Activated CD8-positive, alpha-beta T cell treated with anti-CD3 and anti-CD28 coated beads, Interleukin-2, amount 10 ng/mL, durations not matched to agents 7 days and 5 days (primary cell): ENCODE measurements at regions of chr9 and their contacts with region 1.

Region 1: DNA sequence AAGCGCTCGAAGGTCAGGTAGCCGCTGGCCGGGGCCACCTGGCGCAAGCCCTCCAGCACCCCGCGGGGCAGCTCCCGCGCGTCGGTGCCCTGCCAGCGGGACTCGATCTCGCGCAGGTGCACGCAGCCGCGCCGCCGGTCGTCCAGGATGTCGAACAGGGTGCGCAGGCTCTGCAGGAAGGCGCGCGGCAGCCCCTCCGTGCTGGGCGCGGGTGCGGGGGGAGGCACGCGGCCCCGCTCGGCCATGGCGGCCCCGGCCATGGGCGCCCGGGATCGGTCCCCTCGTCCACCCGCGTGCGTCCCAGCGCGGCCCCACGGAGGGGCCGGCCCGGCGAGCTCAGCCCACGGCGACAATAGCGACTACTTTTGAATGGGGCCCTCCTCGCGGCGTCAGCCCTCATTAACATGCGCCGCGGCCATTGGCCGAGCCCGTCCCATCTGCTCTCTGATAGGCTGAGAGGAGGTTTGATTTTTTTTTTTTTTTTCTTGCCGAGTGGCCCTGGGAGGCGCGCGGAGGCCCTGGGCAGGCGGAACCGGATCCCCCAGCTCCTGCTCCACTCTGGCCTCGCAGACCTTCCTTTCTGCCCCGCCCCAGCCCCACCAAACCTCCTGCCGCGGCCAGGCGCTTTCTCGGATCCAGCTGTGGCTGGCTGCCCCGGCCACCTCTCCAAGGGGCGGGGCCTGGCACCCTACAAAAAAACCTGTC is at the start of gene SAPCD2:
- DNase-seq: peak; percentile 92
- ATAC-seq: peak; percentile 90
- H3K4me3 Mint-ChIP-seq: peak within 1 kb of the TSS; percentile 86
- H3K27ac Mint-ChIP-seq: peak within 1 kb of the TSS; percentile 91
- H3K4me1 Mint-ChIP-seq: peaks cover 28% of the 10 kb centered on the region
- H3K27me3 Mint-ChIP-seq: no peaks in the 10 kb centered on the region
- total RNA-seq, gene SAPCD2: 56.8 to 57.0 TPM

Region 2: GRCh38 chr9:136949817-136950655 is 120.3 kb before region 1 on chr9:
- CTCF ChIA-PET with region 1: interaction called, 10 read pairs
- POLR2A ChIA-PET with region 1: no interaction called
- DNase-seq: peak; percentile 98
- ATAC-seq: peak; percentile 97
- H3K4me3 Mint-ChIP-seq: peak overlapping the region; percentile 84
- H3K27ac Mint-ChIP-seq: peak overlapping the region; percentile 90
- H3K4me1 Mint-ChIP-seq: peaks cover 17% of the 10 kb centered on the region
- H3K27me3 Mint-ChIP-seq: no peaks in the 10 kb centered on the region

Region 3: GRCh38 chr9:137007108-137007815 is 63.1 kb before region 1 on chr9:
- CTCF ChIA-PET with region 1: no interaction called
- POLR2A ChIA-PET with region 1: no interaction called
- DNase-seq: no peak
- ATAC-seq: no peak
- H3K4me3 Mint-ChIP-seq: no peak overlapping the region
- H3K27ac Mint-ChIP-seq: no peak overlapping the region
- H3K4me1 Mint-ChIP-seq: peaks cover 13% of the 10 kb centered on the region
- H3K27me3 Mint-ChIP-seq: no peaks in the 10 kb centered on the region

Region 4: DNA sequence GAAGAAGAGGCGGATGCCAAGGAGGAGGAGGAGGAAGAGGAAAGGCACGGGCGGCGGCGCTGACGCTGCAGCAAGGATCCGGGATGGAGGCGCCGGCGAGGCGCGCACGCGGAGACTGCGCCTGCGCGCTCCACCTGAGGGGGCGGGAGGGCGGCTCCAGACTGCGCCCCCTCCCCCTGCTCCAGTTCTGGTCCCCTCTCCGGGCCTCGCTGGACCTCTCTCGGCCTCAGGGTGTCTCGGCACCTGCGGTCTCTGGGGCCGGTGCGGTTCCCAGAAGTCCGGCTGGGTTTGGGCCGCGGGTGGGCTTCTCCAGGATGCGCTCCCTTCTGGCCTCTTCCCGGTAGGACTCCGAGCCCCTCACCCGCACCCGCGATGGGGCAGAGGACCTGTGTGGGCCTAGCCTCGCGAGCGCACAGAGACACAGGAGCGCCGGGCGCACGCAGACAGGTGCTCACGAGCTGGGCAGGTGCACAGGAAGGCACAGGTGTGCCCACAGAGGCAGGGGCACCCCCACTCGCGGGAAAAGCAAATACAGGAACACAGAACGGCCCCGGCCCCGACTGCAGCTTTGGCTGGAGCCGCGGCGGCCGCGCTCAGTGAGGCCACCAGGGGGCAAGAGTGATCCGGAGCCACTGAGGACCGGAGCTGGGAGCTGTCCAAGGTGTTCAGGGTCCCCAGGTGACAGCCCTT is 24.1 kb before region 1 on chr9 and contains the start of gene NPDC1:
- CTCF ChIA-PET with region 1: interaction called, 78 read pairs
- POLR2A ChIA-PET with region 1: interaction called, 5 read pairs
- DNase-seq: peak; percentile 89
- ATAC-seq: peak; percentile 82
- H3K4me3 Mint-ChIP-seq: peak within 1 kb of the TSS; percentile 71
- H3K27ac Mint-ChIP-seq: no peak within 1 kb of the TSS
- H3K4me1 Mint-ChIP-seq: peaks cover 15% of the 10 kb centered on the region
- H3K27me3 Mint-ChIP-seq: peaks cover 28% of the 10 kb centered on the region
- total RNA-seq, gene NPDC1: 20.1 to 29.9 TPM

Region 5: DNA sequence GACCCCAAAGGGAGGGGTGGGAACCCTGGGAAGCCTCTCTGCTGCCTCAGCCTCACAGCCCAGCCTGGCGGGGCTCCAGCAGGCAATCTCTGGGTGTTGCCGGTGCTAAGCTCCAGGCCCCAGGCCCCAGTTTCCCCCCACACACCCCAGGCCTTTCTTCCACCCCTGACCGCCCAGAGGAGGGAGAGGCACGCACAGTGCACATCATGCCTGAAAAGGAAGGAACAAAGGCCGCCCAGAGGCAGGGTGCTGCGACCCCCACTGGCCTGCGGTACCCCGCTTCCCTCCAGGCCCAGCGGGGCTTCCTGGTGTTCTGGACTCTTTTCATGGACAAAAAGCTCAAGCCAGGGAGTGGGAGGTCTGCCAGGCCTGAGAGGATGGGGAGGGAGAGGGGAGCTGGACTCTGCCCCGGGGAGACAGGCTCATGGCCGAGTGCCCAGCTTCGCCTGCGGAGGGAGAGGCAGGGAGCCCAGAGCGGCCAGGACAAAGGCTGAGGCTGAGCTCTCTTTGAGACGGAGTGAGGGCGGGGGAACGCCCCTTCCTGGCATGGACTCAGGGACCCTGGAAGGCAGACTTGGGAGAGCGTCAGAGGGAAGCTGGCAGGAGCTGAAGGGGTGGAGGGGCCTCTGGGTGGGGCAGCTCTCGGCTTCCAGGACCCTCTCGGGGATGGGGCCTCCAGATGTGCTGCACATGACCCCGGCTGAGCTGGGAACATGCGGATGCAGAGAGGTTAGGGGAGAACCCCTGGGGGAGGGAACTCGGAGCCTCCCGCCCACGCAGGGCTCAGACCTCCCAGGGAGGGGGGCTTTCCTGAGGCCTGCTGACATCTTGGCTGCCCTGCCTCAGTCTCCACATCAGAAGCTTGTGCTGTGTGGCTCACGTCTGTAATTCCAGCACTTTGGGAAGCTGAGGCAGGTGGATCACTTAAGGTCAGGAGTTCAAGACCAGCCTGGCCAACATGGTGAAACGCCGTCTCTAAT is 14.7 kb before region 1 on chr9:
- CTCF ChIA-PET with region 1: interaction called, 31 read pairs
- POLR2A ChIA-PET with region 1: interaction called, 6 read pairs
- DNase-seq: no peak
- ATAC-seq: no peak
- H3K4me3 Mint-ChIP-seq: no peak overlapping the region
- H3K27ac Mint-ChIP-seq: no peak overlapping the region
- H3K4me1 Mint-ChIP-seq: no peaks in the 10 kb centered on the region
- H3K27me3 Mint-ChIP-seq: peaks cover 13% of the 10 kb centered on the region

Region 6: DNA sequence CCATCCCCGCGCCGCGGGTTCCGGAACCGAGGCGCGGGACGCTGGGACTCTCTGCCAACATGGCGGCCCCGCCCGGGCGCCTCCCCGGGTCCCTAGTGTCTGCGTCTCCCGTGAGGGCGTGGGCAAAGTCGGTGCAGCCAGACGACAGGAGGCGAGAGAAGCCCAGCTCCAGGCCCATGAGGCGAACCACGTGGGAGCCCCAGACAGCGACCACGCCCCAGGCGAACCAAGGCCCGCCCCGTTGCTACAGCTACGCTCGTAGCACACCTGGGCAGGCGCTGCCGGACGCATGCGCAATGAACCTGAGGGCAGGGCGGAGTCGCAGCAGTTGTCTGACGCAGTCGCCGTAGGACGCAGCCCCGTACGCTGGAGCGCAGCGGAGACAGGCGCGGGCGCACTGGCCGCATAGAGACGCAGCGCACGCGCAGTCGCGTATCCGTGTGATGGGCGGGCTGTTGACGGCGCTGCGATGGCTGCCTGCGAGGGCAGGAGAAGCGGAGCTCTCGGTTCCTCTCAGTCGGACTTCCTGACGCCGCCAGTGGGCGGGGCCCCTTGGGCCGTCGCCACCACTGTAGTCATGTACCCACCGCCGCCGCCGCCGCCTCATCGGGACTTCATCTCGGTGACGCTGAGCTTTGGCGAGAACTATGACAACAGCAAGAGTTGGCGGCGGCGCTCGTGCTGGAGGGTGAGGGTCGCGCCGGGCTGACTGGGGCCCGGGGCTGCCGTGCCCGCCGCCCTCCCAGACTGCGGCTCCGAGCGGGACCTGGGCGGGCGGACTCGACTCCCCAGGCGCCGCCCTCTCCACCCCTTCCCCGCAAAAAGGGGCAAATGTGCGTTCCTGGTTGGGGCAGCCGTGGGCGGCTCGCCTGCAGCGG is 16.4 kb after region 1 on chr9 and contains the start of gene MAN1B1:
- CTCF ChIA-PET with region 1: interaction called, 67 read pairs
- POLR2A ChIA-PET with region 1: interaction called, 49 read pairs
- DNase-seq: peak; percentile 100
- ATAC-seq: peak; percentile 89
- H3K4me3 Mint-ChIP-seq: peak within 1 kb of the TSS; percentile 90
- H3K27ac Mint-ChIP-seq: peak within 1 kb of the TSS; percentile 94
- H3K4me1 Mint-ChIP-seq: peaks cover 39% of the 10 kb centered on the region
- H3K27me3 Mint-ChIP-seq: no peaks in the 10 kb centered on the region
- total RNA-seq, gene MAN1B1: 42.2 to 49.2 TPM

Region 7: GRCh38 chr9:137129456-137130175 is 59.3 kb after region 1 on chr9:
- CTCF ChIA-PET with region 1: interaction called, 10 read pairs
- POLR2A ChIA-PET with region 1: interaction called, 4 read pairs
- DNase-seq: peak; percentile 93
- ATAC-seq: peak; percentile 95
- H3K4me3 Mint-ChIP-seq: peak overlapping the region; percentile 83
- H3K27ac Mint-ChIP-seq: peak overlapping the region; percentile 82
- H3K4me1 Mint-ChIP-seq: peaks cover 31% of the 10 kb centered on the region
- H3K27me3 Mint-ChIP-seq: peaks cover 7% of the 10 kb centered on the region